Body of pancreas (tissue), 4 donors: ENCODE measurements at regions of chr3 and their contacts with region 1.

Region 1: GRCh38 chr3:151439652-151440129 is 21.2 kb downstream of the IGSF10 start:
- DNase-seq: peak; percentile 24 to 47 (median 25)
- ATAC-seq: peak; percentile 78
- H3K4me3 ChIP-seq: no peak overlapping the region
- H3K27ac ChIP-seq: no peak overlapping the region
- H3K4me1 ChIP-seq: no peaks in the 10 kb centered on the region
- H3K27me3 ChIP-seq: no peaks in the 10 kb centered on the region
- CTCF ChIP-seq: peak; percentile 75 to 85 (median 81)
- POLR2A ChIP-seq: no peak

Region 2: DNA sequence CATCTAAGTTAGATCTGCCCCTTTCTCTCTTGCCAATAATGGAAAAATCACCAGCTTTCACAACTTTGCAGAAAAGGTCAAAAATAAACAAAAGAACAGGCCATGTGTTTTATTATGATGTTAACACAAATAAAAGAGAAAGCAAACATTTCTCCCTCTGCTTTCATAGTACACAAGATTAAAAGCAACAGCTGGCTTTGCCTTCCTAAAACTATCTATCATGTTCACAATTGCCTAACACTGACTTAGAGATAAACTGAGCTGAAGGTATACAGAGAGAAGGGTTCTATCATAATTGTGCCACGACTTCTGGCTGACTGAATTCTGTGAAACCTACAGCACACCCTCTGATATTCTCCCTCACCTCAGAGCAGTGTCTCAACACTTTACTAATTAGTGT is 403.6 kb after region 1 on chr3:
- intact Hi-C with region 1: loop called (anchors 10 kb)
- DNase-seq: no peak
- ATAC-seq: no peak
- H3K4me3 ChIP-seq: no peak overlapping the region
- H3K27ac ChIP-seq: no peak overlapping the region
- H3K4me1 ChIP-seq: peaks cover 6% of the 10 kb centered on the region
- H3K27me3 ChIP-seq: no peaks in the 10 kb centered on the region
- CTCF ChIP-seq: no peak
- POLR2A ChIP-seq: no peak

Region 3: GRCh38 chr3:151871639-151872468 is 432.2 kb after region 1 on chr3:
- intact Hi-C with region 1: no loop called
- DNase-seq: peak in 1 of 4 donors; percentile 52
- ATAC-seq: no peak
- H3K4me3 ChIP-seq: no peak overlapping the region
- H3K27ac ChIP-seq: peak overlapping the region in 1 of 4 donors; percentile 32
- H3K4me1 ChIP-seq: no peaks in the 10 kb centered on the region
- H3K27me3 ChIP-seq: no peaks in the 10 kb centered on the region
- CTCF ChIP-seq: no peak
- POLR2A ChIP-seq: no peak